HepG2 (cell line): ENCODE measurements at regions of chr6 and their contacts with region 1.

Region 1: GRCh38 chr6:165486183-165487137 is 176.6 kb downstream of the PDE10A start:
- DNase-seq: no peak
- ATAC-seq: no peak
- H3K4me3 ChIP-seq: no peak overlapping the region
- H3K27ac ChIP-seq: no peak overlapping the region
- H3K4me1 ChIP-seq: no peaks in the 10 kb centered on the region
- H3K27me3 ChIP-seq: no peaks in the 10 kb centered on the region
- CTCF ChIP-seq: no peak
- EP300 ChIP-seq: no peak
- POLR2A ChIP-seq: no peak
- RAD21 ChIP-seq: no peak

Region 2: DNA sequence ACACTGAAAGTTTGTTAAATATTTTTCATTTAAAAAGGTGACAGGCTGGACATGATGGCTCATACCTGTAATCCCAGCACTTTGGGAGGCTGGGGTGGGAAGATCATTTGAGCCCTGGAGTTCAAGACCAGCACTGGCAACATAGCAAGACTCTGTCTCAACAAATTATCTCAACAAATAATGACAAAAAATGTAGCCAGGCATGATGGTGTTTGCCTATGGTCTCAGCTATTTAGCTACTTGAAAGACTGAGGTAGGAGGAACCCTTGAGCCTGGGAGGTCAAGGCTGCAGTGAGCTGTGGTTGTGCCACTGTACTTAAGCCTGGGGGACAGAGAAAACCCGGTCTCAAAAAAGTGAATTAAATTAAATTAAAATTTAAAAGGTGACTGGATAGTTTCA is 121.1 kb before region 1 on chr6:
- CTCF ChIA-PET with region 1: no interaction called
- POLR2A ChIA-PET with region 1: no interaction called
- in situ Hi-C with region 1: no loop called
- intact Hi-C with region 1: no loop called
- DNase-seq: no peak
- ATAC-seq: no peak
- H3K4me3 ChIP-seq: no peak overlapping the region
- H3K27ac ChIP-seq: no peak overlapping the region
- H3K4me1 ChIP-seq: no peaks in the 10 kb centered on the region
- H3K27me3 ChIP-seq: no peaks in the 10 kb centered on the region
- CTCF ChIP-seq: no peak
- EP300 ChIP-seq: no peak
- POLR2A ChIP-seq: no peak
- RAD21 ChIP-seq: no peak

Region 3: GRCh38 chr6:165545806-165546205 is 59.3 kb after region 1 on chr6:
- CTCF ChIA-PET with region 1: no interaction called
- POLR2A ChIA-PET with region 1: no interaction called
- in situ Hi-C with region 1: no loop called
- intact Hi-C with region 1: loop called (anchors 2 kb)
- DNase-seq: no peak
- ATAC-seq: no peak
- H3K4me3 ChIP-seq: no peak overlapping the region
- H3K27ac ChIP-seq: no peak overlapping the region
- H3K4me1 ChIP-seq: no peaks in the 10 kb centered on the region
- H3K27me3 ChIP-seq: no peaks in the 10 kb centered on the region
- CTCF ChIP-seq: no peak
- EP300 ChIP-seq: no peak
- POLR2A ChIP-seq: no peak
- RAD21 ChIP-seq: no peak

Region 4: DNA sequence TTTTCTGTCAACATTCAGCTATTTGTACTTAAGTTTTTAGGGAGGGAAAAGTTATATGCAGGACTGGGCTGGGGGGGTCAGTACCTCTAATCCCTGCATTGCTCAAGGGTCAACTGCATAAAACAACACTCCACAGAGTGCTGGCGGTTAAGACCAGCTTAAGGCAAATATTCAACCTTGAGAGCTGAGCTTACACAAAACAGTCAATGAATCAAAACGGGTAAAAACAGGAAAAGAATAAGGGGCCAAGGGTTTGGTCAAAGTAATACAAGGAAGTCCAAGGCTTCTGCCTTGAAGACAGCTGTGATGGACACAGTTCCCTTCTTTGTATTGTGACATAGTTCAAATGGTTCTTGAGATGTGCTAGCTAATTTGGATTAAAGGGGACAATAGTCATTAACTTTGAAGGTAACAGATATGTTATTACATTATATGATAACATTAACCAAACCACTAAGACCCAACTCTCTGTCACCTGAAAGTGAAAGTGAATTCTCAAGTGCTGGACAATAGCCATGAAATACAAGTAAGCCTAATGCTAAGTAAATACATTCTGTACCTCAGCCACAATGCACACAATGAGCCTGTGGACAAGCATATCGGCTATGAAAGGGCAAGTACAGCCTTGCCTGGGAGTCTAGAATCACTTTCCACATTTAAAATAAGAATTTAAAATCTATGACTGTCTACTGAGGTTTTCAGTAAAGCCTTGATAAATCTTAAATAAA is 69.8 kb after region 1 on chr6:
- CTCF ChIA-PET with region 1: no interaction called
- POLR2A ChIA-PET with region 1: no interaction called
- in situ Hi-C with region 1: no loop called
- intact Hi-C with region 1: no loop called
- DNase-seq: peak; percentile 53
- ATAC-seq: peak; percentile 94
- H3K4me3 ChIP-seq: no peak overlapping the region
- H3K27ac ChIP-seq: no peak overlapping the region
- H3K4me1 ChIP-seq: peaks cover 15% of the 10 kb centered on the region
- H3K27me3 ChIP-seq: no peaks in the 10 kb centered on the region
- CTCF ChIP-seq: no peak
- EP300 ChIP-seq: no peak
- POLR2A ChIP-seq: no peak
- RAD21 ChIP-seq: no peak

Region 5: GRCh38 chr6:165766457-165766856 is 280.0 kb after region 1 on chr6:
- CTCF ChIA-PET with region 1: no interaction called
- POLR2A ChIA-PET with region 1: no interaction called
- in situ Hi-C with region 1: no loop called
- intact Hi-C with region 1: no loop called
- DNase-seq: no peak
- ATAC-seq: no peak
- H3K4me3 ChIP-seq: no peak overlapping the region
- H3K27ac ChIP-seq: no peak overlapping the region
- H3K4me1 ChIP-seq: no peaks in the 10 kb centered on the region
- H3K27me3 ChIP-seq: peaks cover 0 to 19% of the 10 kb centered on the region in 2 experiments; a peak in 3 of 5 replicates
- CTCF ChIP-seq: no peak
- EP300 ChIP-seq: no peak
- POLR2A ChIP-seq: no peak
- RAD21 ChIP-seq: no peak